Naive thymus-derived CD4-positive, alpha-beta T cell (primary cell): ENCODE measurements at regions of chr13 and their contacts with region 1.

Region 1: DNA sequence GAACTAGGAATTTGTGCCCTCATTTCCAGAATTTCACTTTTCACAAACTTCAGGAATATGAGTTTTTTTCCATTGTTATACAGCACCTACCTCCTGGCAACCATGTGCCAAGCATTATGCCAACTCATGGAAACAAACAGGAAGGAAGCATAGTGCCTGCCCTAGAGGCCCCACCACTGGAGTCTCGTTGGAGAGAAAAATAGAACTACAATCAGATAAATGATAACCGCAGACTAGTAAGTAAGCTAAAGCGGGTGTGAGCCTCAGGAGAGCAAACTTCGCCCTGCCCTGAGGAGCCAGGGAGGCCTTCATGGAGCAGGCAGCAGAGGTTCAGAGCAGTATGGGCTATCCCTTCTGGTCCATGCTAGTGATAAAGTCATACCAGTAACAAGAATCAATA is 75.9 kb downstream of the FRY start:
- DNase-seq: no peak
- ATAC-seq: peak; percentile 27
- H3K4me3 ChIP-seq: no peak overlapping the region
- H3K4me3 Mint-ChIP-seq: no peak overlapping the region
- H3K27ac ChIP-seq: no peak overlapping the region
- H3K27ac Mint-ChIP-seq: no peak overlapping the region
- H3K4me1 ChIP-seq: no peaks in the 10 kb centered on the region
- H3K4me1 Mint-ChIP-seq: peaks cover 0 to 7% (median 0%) of the 10 kb centered on the region in 7 donors
- H3K27me3 ChIP-seq: no peaks in the 10 kb centered on the region
- H3K27me3 Mint-ChIP-seq: no peaks in the 10 kb centered on the region

Region 2: GRCh38 chr13:32031815-32032370 is 75.6 kb before region 1 on chr13:
- CTCF ChIA-PET with region 1: no interaction called
- POLR2A ChIA-PET with region 1: no interaction called
- intact Hi-C with region 1: no loop called
- DNase-seq: no peak
- ATAC-seq: no peak
- H3K4me3 ChIP-seq: peak overlapping the region; percentile 71
- H3K4me3 Mint-ChIP-seq: peak overlapping the region; percentile 82 to 99 (median 90)
- H3K27ac ChIP-seq: peak overlapping the region; percentile 72
- H3K27ac Mint-ChIP-seq: peak overlapping the region; percentile 77 to 97 (median 83)
- H3K4me1 ChIP-seq: peaks cover 3 to 16% of the 10 kb centered on the region in 2 donors
- H3K4me1 Mint-ChIP-seq: peaks cover 10 to 71% (median 56%) of the 10 kb centered on the region in 7 donors
- H3K27me3 ChIP-seq: no peaks in the 10 kb centered on the region
- H3K27me3 Mint-ChIP-seq: peaks cover 7 to 49% (median 13%) of the 10 kb centered on the region in 5 donors

Region 3: DNA sequence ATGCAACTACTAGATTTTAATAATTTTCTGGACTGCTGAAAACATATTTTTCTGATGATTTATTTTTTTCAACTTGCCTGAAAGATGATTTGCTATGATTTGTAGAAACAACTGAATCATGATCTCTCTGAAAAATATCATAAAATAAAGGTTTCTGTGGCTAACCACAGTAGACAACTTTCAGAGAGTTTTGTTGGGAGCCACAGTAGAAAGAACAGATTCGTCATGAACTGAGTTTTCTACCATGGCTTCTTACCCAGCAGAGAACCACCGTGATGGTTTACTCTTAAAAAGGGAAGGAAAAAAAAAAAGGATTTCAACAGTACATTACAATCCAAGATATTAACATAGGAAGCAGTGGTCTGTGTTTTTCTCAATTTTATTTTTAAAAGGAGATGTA is 189.7 kb after region 1 on chr13:
- CTCF ChIA-PET with region 1: no interaction called
- POLR2A ChIA-PET with region 1: no interaction called
- intact Hi-C with region 1: no loop called
- DNase-seq: no peak
- ATAC-seq: no peak
- H3K4me3 ChIP-seq: no peak overlapping the region
- H3K4me3 Mint-ChIP-seq: no peak overlapping the region
- H3K27ac ChIP-seq: no peak overlapping the region
- H3K27ac Mint-ChIP-seq: no peak overlapping the region
- H3K4me1 ChIP-seq: no peaks in the 10 kb centered on the region
- H3K4me1 Mint-ChIP-seq: peaks cover 0 to 10% (median 0%) of the 10 kb centered on the region in 7 donors
- H3K27me3 ChIP-seq: no peaks in the 10 kb centered on the region
- H3K27me3 Mint-ChIP-seq: peaks cover 9 to 28% (median 11%) of the 10 kb centered on the region in 5 donors

Region 4: GRCh38 chr13:32491028-32491427 is 383.6 kb after region 1 on chr13:
- CTCF ChIA-PET with region 1: no interaction called
- POLR2A ChIA-PET with region 1: no interaction called
- intact Hi-C with region 1: loop called in 1 of 2 experiments (anchors 5 kb)
- DNase-seq: no peak
- ATAC-seq: no peak
- H3K4me3 ChIP-seq: no peak overlapping the region
- H3K4me3 Mint-ChIP-seq: no peak overlapping the region
- H3K27ac ChIP-seq: no peak overlapping the region
- H3K27ac Mint-ChIP-seq: no peak overlapping the region
- H3K4me1 ChIP-seq: no peaks in the 10 kb centered on the region
- H3K4me1 Mint-ChIP-seq: peaks cover 0 to 10% (median 7%) of the 10 kb centered on the region in 7 donors
- H3K27me3 ChIP-seq: no peaks in the 10 kb centered on the region
- H3K27me3 Mint-ChIP-seq: no peaks in the 10 kb centered on the region